Vagina (tissue), 2 donors: ENCODE measurements at regions of chr4 and their contacts with region 1.

Region 1: GRCh38 chr4:123259676-123260646 is 136.6 kb upstream of the SPRY1 start:
- DNase-seq: no peak
- H3K4me3 ChIP-seq: no peak overlapping the region
- H3K27ac ChIP-seq: no peak overlapping the region
- H3K4me1 ChIP-seq: peaks cover 17% of the 10 kb centered on the region
- H3K27me3 ChIP-seq: no peaks in the 10 kb centered on the region
- CTCF ChIP-seq: no peak
- POLR2A ChIP-seq: no peak

Region 2: DNA sequence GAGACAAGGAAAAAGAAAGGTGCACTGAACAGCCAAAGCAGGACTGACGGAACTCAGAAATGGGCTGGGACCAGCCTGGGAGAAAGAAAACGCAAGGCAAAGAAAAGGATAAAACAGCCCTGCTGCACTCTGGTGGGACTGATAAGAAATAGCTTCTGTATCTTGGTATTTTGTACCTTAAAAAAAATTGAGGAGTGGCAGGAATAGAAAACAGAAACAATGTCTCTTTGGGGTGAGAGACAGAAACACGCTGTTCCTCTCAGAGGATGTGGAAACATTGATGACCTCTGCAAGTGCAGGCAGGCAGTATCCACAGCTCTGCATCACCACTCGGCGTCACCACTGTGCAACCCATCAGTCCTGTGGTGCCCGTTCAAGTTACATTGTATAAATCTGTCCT is 15.8 kb before region 1 on chr4:
- intact Hi-C with region 1: loop called (anchors 2 kb)
- DNase-seq: peak in 1 of 2 donors; percentile 89
- H3K4me3 ChIP-seq: no peak overlapping the region
- H3K27ac ChIP-seq: no peak overlapping the region
- H3K4me1 ChIP-seq: peaks cover 48% of the 10 kb centered on the region
- H3K27me3 ChIP-seq: no peaks in the 10 kb centered on the region
- CTCF ChIP-seq: no peak
- POLR2A ChIP-seq: no peak